Left colon (tissue), 2 donors: ENCODE measurements at regions of chr20 and their contacts with region 1.

Region 1: GRCh38 chr20:1325173-1326030 is 3.5 kb downstream of the SDCBP2 start:
- DNase-seq: peak; percentile 97 to 98
- ATAC-seq: peak; percentile 48

Region 2: DNA sequence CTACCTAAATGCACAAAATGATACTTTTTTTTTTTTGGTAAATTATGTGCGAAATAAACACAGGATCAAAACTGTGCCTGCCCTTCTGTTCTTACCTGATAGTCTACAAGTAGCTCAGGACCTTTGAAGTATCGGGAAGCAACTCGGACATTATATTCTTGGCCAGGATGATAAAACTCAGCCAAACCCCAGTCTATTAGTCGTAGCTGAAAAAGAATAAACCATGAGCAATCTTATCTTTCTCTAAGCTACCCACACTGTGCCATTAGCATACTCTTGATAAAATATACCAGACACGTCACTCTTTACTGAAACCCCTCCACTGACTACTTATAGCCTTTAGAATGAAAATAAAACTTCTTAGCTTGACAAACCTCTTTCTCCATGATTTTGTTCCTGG is 833.2 kb before region 1 on chr20:
- intact Hi-C with region 1: no loop called
- DNase-seq: no peak
- ATAC-seq: no peak

Region 3: DNA sequence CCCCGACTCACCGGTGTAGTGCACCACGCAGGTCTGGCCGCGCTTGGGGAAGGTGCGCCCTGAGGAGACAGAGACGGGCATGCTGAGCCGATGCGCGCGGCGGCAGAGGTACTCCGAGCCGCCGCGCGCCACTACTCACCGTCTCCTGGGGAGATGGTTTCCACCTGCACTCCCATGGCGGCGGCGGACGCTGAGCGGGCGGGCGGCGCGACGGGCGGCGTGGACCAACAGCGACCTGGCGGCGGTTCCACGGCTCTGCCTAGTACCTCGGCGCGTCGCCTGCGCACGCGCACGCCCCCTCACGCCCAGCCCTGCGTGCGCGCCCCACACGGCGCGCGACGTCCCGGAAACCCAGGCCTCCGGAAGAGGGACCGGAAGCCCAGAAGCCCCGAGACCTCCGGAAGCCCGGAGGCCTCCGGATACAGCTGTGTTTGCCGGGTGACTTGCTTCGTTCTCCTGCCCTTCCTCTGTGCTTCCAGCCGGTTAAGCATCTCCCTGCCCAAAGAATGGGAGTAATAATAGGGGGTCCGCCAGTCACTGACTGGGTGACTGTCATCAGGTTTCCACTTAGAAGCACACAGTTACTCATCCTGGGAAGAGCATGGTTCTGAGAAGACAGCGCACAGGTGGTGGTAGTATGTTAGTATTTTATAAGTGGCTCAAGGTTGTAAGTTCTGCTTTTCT is 67.6 kb after region 1 on chr20 and contains the start of gene FKBP1A:
- intact Hi-C with region 1: loop called in 1 of 2 experiments (anchors 5 kb)
- DNase-seq: peak; percentile 91 to 93
- ATAC-seq: peak; percentile 95
- total RNA-seq, gene FKBP1A: 259 to 309 TPM